ENCODE measurements at regions of chr12 and their contacts with region 1.

Region 1: GRCh38 chr12:100375038-100375735 is 18.3 kb downstream of the SLC17A8 start:
- DNase-seq: peak; percentile 35
- H3K4me3 ChIP-seq: no peak overlapping the region
- H3K27ac ChIP-seq: no peak overlapping the region
- H3K4me1 ChIP-seq: peaks cover 0 to 4% (median 0%) of the 10 kb centered on the region in 4 donors
- H3K27me3 ChIP-seq: no peaks in the 10 kb centered on the region
- CTCF ChIP-seq: no peak
- EP300 ChIP-seq: no peak
- POLR2A ChIP-seq: no peak

Region 2: DNA sequence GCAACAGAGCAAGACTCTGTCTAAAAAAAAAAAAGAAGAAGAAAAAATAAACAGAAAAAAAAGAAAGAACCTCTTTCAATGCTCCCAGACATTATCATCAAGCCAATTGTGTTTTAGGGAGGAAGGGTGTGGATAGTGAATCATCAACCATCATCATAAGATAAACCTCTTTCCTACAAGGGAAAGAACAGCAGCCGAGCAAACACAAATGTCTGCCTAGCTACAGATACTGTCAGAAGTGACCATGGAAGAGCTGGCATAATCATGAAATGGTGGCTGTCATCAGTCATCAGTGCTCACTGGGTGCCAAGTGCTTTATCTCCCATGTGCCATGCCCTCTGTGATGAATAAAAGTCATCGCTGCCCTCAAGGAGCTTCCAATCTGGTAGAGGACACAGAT is 28.3 kb after region 1 on chr12:
- in situ Hi-C with region 1: no loop called
- intact Hi-C with region 1: no loop called
- DNase-seq: no peak
- H3K4me3 ChIP-seq: no peak overlapping the region
- H3K27ac ChIP-seq: peak overlapping the region in 2 of 4 donors; percentile 32 to 38
- H3K4me1 ChIP-seq: peaks cover 0 to 38% (median 9%) of the 10 kb centered on the region in 4 donors
- H3K27me3 ChIP-seq: no peaks in the 10 kb centered on the region
- CTCF ChIP-seq: no peak
- EP300 ChIP-seq: no peak
- POLR2A ChIP-seq: no peak

Region 3: DNA sequence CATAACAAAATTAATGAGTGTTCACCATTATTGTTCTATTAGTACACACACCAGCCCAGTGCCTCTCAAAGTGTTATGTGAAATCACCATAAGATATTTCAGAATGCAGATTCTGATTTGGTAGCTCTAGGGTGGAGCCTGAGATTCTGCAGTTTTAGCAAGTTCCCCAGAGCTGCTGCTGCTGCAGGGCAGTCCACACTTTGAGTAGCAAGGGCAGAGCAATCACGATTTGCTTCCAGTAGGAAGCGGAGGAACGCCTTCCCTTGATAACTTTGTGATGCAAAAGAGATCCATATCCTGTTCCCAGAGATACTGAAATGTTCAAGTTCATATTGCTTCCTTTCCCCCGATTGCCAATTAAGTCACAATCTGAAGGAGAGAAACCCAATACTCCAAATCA is 39.6 kb after region 1 on chr12:
- in situ Hi-C with region 1: no loop called
- intact Hi-C with region 1: no loop called
- DNase-seq: no peak
- H3K4me3 ChIP-seq: no peak overlapping the region
- H3K27ac ChIP-seq: no peak overlapping the region
- H3K4me1 ChIP-seq: no peaks in the 10 kb centered on the region
- H3K27me3 ChIP-seq: no peaks in the 10 kb centered on the region
- CTCF ChIP-seq: no peak
- EP300 ChIP-seq: no peak
- POLR2A ChIP-seq: no peak

Region 4: DNA sequence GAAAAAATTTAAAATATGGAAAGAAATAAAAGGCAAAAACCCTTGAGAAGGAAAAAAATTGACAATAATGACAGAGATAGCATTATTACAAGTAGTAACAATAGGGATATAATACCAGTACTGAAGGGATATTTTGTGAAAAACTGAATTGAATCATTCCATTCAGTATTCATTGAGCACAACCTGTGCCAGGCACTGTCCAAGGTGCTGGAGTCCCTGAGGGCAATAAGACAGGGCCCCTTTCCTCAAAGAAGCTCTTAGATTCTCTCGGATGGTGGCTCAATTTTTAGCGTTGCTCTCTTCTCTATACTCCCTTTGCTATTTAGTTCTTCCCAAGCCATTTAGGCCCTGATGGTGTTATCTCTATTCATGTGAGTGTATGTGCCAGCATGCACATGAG is 164.0 kb after region 1 on chr12:
- in situ Hi-C with region 1: loop called in 1 of 4 experiments (anchors 25 kb)
- intact Hi-C with region 1: no loop called
- DNase-seq: no peak
- H3K4me3 ChIP-seq: no peak overlapping the region
- H3K27ac ChIP-seq: no peak overlapping the region
- H3K4me1 ChIP-seq: no peaks in the 10 kb centered on the region
- H3K27me3 ChIP-seq: no peaks in the 10 kb centered on the region
- CTCF ChIP-seq: no peak
- EP300 ChIP-seq: no peak
- POLR2A ChIP-seq: no peak

Region 5: DNA sequence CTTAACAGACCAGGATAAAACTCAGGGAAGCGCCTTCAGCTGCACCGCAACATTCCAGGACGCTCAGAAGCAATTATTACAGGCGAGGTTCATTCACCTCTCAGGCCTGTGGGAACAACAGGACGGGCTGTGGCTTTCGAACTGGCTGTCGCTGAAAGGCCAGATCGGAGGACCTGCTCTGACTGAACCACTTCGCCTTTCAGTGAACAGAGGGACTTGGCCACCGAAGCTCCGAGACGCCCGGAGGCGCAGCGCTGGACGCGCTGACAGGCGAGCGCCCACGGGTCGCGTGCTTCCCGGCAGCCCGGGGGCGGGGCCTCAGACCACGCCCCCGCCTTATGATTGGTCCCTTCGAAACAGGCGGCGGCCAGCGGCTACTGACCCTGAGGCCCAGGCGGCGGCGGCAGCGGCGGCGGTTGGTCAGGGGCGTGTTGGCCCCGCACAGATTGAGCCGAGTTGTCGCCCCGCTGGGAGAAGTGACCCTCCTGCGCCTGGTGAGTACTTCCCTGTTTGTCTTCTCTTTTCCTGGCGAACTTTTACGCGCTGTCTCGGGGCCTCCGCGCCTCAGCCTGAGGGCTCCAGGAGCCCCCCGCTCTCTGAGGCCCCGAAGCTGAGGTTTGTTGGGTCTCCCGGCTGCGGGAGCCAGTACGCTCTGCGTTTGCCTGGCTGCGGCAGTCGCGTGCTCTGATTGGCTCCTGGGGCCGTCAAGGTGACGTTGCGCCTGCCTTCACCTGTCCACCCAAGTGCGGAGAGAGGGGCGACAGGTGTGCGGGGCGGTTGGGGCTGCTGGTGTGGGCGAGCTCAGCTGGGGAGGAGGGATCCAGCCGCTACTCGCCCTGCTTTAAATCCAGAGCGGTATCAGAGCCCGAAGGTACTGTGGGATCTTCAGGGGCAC is 198.4 kb after region 1 on chr12 and contains the start of gene GAS2L3:
- in situ Hi-C with region 1: loop called in 1 of 4 experiments (anchors 25 kb)
- intact Hi-C with region 1: no loop called
- DNase-seq: peak; percentile 91
- H3K4me3 ChIP-seq: peak within 1 kb of the TSS; percentile 57 to 66 (median 62)
- H3K27ac ChIP-seq: peak within 1 kb of the TSS; percentile 77 to 90 (median 87)
- H3K4me1 ChIP-seq: peaks cover 0 to 26% (median 10%) of the 10 kb centered on the region in 4 donors
- H3K27me3 ChIP-seq: no peaks in the 10 kb centered on the region
- CTCF ChIP-seq: no peak
- EP300 ChIP-seq: no peak
- POLR2A ChIP-seq: peak; percentile 91
- total RNA-seq, gene GAS2L3: 0.80 to 15.7 (median 7.6) TPM

Region 6: GRCh38 chr12:100675432-100675831 is 300.2 kb after region 1 on chr12:
- in situ Hi-C with region 1: loop called in 1 of 4 experiments (anchors 25 kb)
- intact Hi-C with region 1: no loop called
- DNase-seq: peak; percentile 14
- H3K4me3 ChIP-seq: no peak overlapping the region
- H3K27ac ChIP-seq: no peak overlapping the region
- H3K4me1 ChIP-seq: no peaks in the 10 kb centered on the region
- H3K27me3 ChIP-seq: no peaks in the 10 kb centered on the region
- CTCF ChIP-seq: no peak
- EP300 ChIP-seq: no peak
- POLR2A ChIP-seq: no peak